ENCODE measurements at regions of chr5 and their contacts with region 1.

Region 1: GRCh38 chr5:68287976-68288706 is 72.6 kb downstream of the PIK3R1 start:
- DNase-seq: peak; percentile 68 to 87
- ATAC-seq: peak; percentile 84 to 87 (median 86)
- H3K4me3 ChIP-seq: peak overlapping the region; percentile 77
- H3K27ac ChIP-seq: peak overlapping the region; percentile 95
- H3K4me1 ChIP-seq: peaks cover 57% of the 10 kb centered on the region
- H3K27me3 ChIP-seq: no peaks in the 10 kb centered on the region
- CTCF ChIP-seq: no peak

Region 2: DNA sequence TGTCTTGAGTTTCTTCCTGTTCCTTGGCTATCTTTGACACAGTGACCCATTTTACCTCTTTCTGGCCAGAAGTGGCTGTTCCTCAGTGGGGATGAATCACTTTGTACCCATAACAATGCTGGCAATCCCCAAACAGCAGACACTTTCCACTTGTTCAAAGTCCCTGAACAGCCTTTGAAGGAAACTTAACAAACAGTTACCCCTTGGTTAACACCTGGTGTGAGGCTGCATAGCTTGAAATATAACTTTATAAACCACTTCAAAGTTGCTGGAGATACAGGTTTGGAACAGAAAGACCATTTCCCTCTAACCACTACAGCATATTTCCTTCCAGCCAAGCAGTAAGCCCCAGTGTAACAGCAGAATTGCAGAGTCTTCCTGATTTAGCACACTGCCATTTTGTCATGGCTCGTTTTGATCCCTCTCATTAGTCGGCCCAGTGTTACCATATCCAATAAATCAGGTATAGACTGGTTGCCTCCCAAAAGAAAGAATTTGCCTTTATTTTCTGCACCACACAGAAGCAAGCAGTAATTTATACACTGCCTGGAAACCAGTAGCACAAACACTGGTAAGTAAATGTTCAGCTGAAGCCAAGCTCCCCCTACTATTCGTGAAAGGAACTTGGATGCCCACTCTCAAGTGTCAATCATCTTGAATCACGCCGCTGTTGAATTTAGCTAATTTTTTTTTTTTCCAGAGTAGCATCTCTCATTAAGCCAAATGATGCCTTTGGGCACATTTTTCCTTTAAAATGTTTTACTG is 153.3 kb after region 1 on chr5:
- intact Hi-C with region 1: loop called in 1 of 2 experiments (anchors 5 kb)
- DNase-seq: no peak
- ATAC-seq: peak in 1 of 4 donors; percentile 33
- H3K4me3 ChIP-seq: no peak overlapping the region
- H3K27ac ChIP-seq: no peak overlapping the region
- H3K4me1 ChIP-seq: no peaks in the 10 kb centered on the region
- H3K27me3 ChIP-seq: no peaks in the 10 kb centered on the region
- CTCF ChIP-seq: no peak

Region 3: DNA sequence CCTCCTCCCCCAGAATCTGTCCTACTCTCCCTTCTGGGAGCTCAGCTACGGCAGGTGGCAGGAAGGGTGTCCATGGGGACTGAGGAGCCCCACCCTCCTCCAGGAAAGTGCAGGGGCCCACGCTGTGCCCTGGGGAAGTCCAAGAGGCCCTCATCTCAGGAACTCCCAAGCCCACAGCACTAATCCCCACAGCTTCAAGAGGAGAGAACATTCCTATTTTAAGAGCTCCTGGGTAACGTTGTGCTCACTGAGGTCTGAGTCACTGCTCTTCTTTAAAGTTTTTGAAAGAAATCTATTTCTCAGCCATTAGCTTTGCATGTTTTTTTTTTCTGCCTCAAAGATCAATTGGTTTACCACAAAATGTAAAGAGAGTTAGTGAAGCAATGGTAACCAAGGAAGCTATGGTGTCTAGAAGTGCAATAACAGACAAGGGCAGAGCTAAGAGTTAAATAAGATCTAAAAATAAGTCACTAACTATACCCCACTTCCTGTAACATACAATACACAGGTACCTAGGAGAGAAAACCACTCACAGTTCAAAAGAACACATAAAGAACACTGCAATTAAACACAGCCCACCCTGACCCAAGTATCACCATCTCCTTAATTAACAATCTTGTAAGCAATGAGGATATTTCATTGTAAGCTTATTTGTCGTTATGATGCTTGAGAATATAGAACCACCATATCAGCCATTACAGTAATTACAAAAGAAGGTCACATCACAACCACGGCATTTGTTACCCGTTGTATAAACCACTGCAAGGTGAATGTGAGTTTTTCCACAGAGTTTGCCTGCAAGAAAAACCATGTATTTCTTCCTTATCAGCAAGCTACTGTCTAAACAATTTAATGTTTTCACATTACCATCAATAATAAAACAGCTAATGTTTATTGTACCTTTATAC is 423.4 kb after region 1 on chr5:
- intact Hi-C with region 1: loop called in 1 of 2 experiments (anchors 2 kb)
- DNase-seq: no peak
- ATAC-seq: peak; percentile 38 to 66 (median 60)
- H3K4me3 ChIP-seq: no peak overlapping the region
- H3K27ac ChIP-seq: peak overlapping the region; percentile 85
- H3K4me1 ChIP-seq: peaks cover 44% of the 10 kb centered on the region
- H3K27me3 ChIP-seq: no peaks in the 10 kb centered on the region
- CTCF ChIP-seq: no peak

Region 4: GRCh38 chr5:68818057-68818695 is 530.0 kb after region 1 on chr5:
- intact Hi-C with region 1: loop called in 1 of 2 experiments (anchors 5 kb)
- DNase-seq: no peak
- ATAC-seq: peak; percentile 52 to 79 (median 66)
- H3K4me3 ChIP-seq: no peak overlapping the region
- H3K27ac ChIP-seq: peak overlapping the region; percentile 44
- H3K4me1 ChIP-seq: no peaks in the 10 kb centered on the region
- H3K27me3 ChIP-seq: no peaks in the 10 kb centered on the region
- CTCF ChIP-seq: peak; percentile 7

Region 5: GRCh38 chr5:69007726-69008368 is 719.7 kb after region 1 on chr5:
- intact Hi-C with region 1: loop called in 1 of 2 experiments (anchors 5 kb)
- DNase-seq: peak; percentile 56 to 72
- ATAC-seq: peak; percentile 77 to 88 (median 82)
- H3K4me3 ChIP-seq: no peak overlapping the region
- H3K27ac ChIP-seq: no peak overlapping the region
- H3K4me1 ChIP-seq: no peaks in the 10 kb centered on the region
- H3K27me3 ChIP-seq: no peaks in the 10 kb centered on the region
- CTCF ChIP-seq: peak; percentile 85

Measured in psoas muscle (tissue), 8 donors.